Mammary epithelial cell (primary cell): ENCODE measurements at regions of chr2 and their contacts with region 1.

Region 1: DNA sequence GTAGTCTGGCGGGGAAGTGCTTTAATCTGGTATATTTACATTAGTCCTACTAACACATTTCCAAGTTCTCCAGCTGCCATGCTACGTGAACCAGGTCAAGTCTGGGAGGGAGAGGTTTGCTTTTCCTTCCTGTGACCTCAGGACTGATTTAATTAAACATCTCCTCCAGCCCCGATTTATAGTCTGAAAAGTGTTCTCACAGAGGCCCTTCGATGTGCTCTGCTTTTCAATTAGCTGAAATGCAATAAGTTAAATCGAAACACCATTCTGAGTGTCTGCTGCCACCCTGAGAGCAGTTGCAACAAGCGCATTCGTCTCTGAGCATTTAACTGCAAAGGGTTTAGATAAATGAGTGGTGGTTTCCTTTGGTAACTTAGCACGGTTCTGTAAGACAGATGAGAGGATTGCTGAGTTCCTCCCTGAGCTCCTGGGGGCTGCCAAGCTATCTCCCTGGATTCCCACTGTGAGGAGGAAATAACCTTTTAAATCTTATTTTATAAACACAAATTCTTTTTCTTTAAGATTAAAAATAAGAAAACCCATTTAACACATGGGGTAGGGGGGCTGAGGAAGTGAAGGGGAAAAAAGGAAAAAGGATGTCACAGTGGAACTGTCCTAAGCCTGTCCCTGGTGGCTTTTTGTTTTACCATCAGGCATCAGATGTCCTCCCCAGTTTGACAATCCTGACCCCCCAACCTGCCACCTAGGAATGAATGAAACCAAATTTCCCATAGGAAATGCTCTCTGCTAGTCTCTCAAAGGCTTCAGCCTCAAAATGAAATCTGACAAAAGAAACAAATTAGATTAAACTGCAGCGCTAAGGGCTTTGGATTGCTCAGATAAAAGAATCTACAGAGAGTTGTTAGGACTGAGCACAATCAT is 56.5 kb upstream of the CREB1 start:
- DNase-seq: peak; percentile 68
- H3K4me3 ChIP-seq: no peak overlapping the region
- H3K27ac ChIP-seq: peak overlapping the region; percentile 20
- H3K4me1 ChIP-seq: peaks cover 24% of the 10 kb centered on the region
- H3K27me3 ChIP-seq: no peaks in the 10 kb centered on the region
- CTCF ChIP-seq: peak; percentile 87 to 88

Region 2: GRCh38 chr2:206693399-206694137 is 779.7 kb before region 1 on chr2:
- CTCF ChIA-PET with region 1: no interaction called
- dilution Hi-C with region 1: no loop called
- in situ Hi-C with region 1: loop called in 1 of 2 experiments (anchors 10 kb)
- intact Hi-C with region 1: loop called (anchors 1 kb)
- DNase-seq: peak; percentile 55
- H3K4me3 ChIP-seq: no peak overlapping the region
- H3K27ac ChIP-seq: no peak overlapping the region
- H3K4me1 ChIP-seq: no peaks in the 10 kb centered on the region
- H3K27me3 ChIP-seq: no peaks in the 10 kb centered on the region
- CTCF ChIP-seq: peak; percentile 66 to 68

Region 3: DNA sequence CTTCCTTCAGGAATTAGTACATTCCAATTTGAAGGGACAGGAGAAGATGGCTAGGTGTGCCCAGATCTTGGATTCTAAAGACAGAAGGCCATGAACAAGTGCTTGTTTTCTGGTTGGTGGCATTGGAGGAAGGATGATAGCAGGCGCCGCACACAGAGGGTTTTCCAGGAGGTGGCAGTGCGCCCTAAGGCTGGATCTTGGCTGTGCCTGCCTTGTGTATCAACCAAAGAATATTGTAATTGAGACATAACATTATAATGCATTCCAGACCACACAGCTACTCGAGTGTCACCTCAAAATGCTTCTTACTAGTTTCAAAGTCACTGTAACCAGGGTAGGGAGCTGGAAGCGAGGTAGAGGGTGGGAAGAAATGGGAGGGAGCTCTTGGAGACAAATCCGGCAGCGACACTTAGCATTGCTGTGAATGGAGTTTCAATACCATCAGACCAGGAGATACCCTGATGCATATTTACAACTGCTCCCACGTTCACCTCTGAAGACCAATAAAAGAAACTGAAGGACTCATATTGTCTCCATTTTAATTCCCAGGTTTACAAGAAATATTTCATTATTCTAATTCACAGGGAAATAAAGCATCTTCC is 491.4 kb before region 1 on chr2:
- CTCF ChIA-PET with region 1: no interaction called
- dilution Hi-C with region 1: no loop called
- in situ Hi-C with region 1: loop called (anchors 5 kb)
- intact Hi-C with region 1: loop called (anchors 1 kb)
- DNase-seq: peak; percentile 64
- H3K4me3 ChIP-seq: no peak overlapping the region
- H3K27ac ChIP-seq: no peak overlapping the region
- H3K4me1 ChIP-seq: peaks cover 21% of the 10 kb centered on the region
- H3K27me3 ChIP-seq: no peaks in the 10 kb centered on the region
- CTCF ChIP-seq: peak; percentile 90 to 92

Region 4: DNA sequence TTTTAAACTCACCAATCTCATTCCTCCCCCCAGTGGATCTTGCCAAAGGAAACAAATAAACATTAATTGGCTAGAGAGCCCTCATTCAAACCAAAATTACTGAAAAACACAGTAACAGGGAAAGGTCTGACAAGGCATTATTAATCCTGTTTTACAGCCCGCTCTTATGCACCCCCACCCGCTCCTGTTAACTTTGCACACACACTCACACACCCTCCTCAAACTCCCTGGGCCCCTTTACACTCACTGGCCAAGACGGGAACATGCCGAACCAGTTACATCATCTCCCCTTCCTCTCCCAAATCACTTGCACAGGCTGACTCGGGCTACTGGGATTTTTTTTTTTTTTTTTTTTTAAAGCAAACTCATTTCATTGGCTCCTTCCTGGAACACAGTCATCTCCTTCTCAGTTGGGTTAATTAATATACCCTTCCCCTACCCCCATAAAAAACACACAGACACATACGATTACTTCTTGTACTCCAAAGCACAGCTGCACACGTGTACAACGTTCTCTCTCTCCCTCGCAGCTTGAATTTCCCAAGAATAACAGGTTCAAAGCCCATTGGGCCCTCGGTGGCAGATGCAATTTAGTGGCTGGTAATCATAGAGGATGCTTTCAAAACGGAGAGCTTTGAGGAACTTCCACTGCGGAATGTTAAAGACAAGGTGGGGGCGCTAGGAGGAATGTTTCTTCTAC is 339.3 kb before region 1 on chr2:
- CTCF ChIA-PET with region 1: no interaction called
- dilution Hi-C with region 1: no loop called
- in situ Hi-C with region 1: no loop called
- intact Hi-C with region 1: loop called (anchors 5 kb)
- DNase-seq: no peak
- H3K4me3 ChIP-seq: no peak overlapping the region
- H3K27ac ChIP-seq: no peak overlapping the region
- H3K4me1 ChIP-seq: peaks cover 32% of the 10 kb centered on the region
- H3K27me3 ChIP-seq: no peaks in the 10 kb centered on the region
- CTCF ChIP-seq: no peak

Region 5: GRCh38 chr2:207254591-207255464 is 218.5 kb before region 1 on chr2:
- CTCF ChIA-PET with region 1: no interaction called
- dilution Hi-C with region 1: no loop called
- in situ Hi-C with region 1: no loop called
- intact Hi-C with region 1: loop called (anchors 5 kb)
- DNase-seq: peak; percentile 54
- H3K4me3 ChIP-seq: peak overlapping the region in 2 of 3 experiments; percentile 8 to 15
- H3K27ac ChIP-seq: peak overlapping the region; percentile 86
- H3K4me1 ChIP-seq: peaks cover 90% of the 10 kb centered on the region
- H3K27me3 ChIP-seq: no peaks in the 10 kb centered on the region
- CTCF ChIP-seq: no peak

Region 6: DNA sequence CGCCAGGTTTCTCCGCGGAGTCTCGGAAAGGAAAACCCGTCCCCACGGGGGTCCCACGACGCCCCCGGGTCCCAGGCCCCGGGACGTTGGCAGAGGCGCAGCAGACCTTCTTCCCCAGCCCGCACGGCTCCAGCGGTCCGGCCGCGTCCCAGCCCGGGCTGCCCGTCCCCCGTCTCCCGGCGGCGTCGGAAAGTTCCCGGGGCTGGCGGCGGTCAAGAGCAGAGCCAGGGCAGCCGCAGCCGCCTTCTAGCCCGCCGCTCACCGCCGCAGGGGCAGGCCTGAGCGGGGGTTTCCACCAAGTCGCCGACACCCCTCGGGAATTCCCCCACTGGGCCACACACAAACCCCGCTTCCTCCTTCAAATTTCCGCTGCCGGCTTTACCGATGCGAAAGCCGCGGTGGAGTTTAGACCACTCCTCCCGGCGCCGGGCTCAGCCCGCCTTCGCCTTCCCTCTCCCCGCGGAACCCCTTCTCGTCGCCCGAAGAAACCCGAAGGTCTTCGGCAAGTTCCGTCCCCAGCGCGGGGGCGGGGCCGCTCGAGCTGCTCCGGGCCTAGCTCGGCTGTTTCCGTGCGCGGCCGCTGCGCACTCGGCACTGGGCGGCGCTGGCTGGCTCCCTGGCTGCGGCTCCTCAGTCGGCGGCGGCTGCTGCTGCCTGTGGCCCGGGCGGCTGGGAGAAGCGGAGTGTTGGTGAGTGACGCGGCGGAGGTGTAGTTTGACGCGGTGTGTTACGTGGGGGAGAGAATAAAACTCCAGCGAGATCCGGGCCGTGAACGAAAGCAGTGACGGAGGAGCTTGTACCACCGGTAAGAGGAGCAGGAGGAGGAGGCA is 56.3 kb after region 1 on chr2 and contains the start of gene CREB1:
- CTCF ChIA-PET with region 1: no interaction called
- dilution Hi-C with region 1: no loop called
- in situ Hi-C with region 1: no loop called
- intact Hi-C with region 1: loop called (anchors 1 kb)
- DNase-seq: peak; percentile 99
- H3K4me3 ChIP-seq: peak within 1 kb of the TSS; percentile 88 to 94 (median 89)
- H3K27ac ChIP-seq: peak within 1 kb of the TSS; percentile 99
- H3K4me1 ChIP-seq: peaks cover 19% of the 10 kb centered on the region
- H3K27me3 ChIP-seq: no peaks in the 10 kb centered on the region
- CTCF ChIP-seq: no peak
- total RNA-seq, gene CREB1: 42.3 to 75.5 TPM